Dorsolateral prefrontal cortex (tissue), 120 donors: ENCODE measurements at regions of chr17 and their contacts with region 1.

Region 1: GRCh38 chr17:40349920-40350909 is 14.3 kb downstream of the GJD3 start:
- DNase-seq: no peak
- H3K4me3 ChIP-seq: peak overlapping the region in 8 of 59 donors; percentile 5 to 33 (median 12)
- H3K27ac ChIP-seq: peak overlapping the region in 41 of 59 donors; percentile 5 to 92 (median 66)
- H3K27me3 ChIP-seq: no peaks in the 10 kb centered on the region
- CTCF ChIP-seq: no peak

Region 2: DNA sequence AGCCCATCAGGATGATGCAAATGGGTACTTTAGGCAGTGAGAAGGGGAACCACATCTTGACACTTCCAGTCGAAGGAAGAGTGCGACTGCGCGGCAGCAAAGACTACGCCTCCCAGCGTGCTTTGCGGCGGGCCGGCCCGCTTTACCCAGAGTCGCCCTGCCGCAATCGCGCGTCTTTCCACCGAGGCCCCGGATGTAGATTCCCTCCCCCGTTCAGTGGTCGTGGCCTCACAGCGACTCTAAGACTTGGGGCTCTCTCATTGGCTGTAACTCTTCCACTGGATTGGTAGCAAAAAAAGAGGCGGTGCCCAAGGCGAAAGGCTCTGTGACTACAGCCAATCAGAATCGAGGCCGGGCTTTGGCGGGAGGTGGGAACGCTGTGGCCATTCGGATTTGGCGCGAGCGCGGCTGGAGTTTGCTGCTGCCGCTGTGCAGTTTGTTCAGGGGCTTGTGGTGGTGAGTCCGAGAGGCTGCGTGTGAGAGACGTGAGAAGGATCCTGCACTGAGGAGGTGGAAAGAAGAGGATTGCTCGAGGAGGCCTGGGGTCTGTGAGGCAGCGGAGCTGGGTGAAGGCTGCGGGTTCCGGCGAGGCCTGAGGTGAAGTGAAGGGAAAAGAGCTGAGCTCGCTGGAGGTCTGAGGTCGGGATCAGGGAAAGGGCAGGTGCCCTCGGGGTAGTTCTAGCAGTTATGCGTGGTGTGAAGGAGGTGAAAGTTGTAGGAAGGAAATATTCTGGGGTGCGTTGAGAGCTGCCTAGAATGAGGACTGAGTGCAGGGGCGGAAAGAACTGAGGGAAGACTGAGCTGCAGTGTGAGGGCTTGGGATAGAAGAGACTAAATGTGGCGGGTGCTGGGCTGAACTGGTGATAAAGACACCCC is 62.5 kb before region 1 on chr17 and contains the start of gene CDC6:
- intact Hi-C with region 1: no loop called
- DNase-seq: peak; percentile 98 to 99 (median 99)
- H3K4me3 ChIP-seq: peak within 1 kb of the TSS; percentile 41 to 91 (median 66)
- H3K27ac ChIP-seq: peak within 1 kb of the TSS in 49 of 59 donors; percentile 3 to 83 (median 66)
- H3K27me3 ChIP-seq: no peaks in the 10 kb centered on the region
- CTCF ChIP-seq: peak in 42 of 56 donors; percentile 10 to 69 (median 38)
- total RNA-seq, gene CDC6: 1.0 to 12.6 (median 6.7) TPM

Region 3: DNA sequence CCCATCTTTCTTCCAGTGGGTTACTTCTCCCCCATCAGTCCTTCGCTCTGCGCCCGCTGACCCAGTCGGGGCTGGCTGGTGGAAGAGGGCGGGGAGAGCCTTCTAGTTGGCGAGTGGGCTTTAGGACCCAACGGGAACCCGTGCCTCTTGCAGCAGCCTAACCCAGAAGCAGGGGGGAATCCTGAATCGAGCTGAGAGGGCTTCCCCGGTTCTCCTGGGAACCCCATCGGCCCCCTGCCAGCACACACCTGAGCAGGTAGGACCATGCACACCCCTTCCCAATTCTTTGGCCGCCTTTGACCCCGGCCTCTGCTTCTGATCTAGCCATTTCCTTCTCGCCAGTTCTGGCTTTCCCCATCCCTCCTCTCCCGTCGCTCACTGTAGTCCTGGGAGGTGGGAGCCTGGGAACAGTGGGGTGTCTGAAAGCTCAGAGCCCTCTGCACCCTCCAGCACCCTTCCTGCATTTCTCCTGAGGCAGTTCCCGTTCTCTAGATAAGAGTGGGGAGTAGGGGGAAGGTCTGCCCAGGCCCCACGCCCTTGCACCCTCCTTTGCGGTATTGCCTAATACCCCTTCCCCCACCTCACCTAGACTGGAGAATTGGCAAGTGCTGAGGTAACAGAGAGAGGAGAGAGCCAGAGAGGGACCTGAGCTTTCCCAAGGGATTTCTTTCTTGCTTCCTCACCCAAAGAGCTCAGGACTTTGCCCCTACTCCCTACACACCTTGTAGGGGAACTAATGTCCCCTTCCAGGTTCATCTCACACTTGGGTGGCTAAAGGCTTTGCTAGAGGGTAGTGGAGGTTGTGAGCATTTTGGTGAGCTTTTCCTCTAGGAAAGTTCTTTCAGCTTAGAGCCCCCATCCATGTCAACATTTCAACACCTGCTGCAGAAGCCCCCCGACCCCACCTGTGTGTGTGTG is 40.9 kb before region 1 on chr17 and contains the start of gene RARA:
- intact Hi-C with region 1: loop called in 1 of 2 experiments (anchors 2 kb)
- DNase-seq: peak in 8 of 10 donors; percentile 60 to 88 (median 78)
- H3K4me3 ChIP-seq: peak within 1 kb of the TSS; percentile 21 to 74 (median 61)
- H3K27ac ChIP-seq: peak within 1 kb of the TSS in 31 of 59 donors; percentile 0 to 84 (median 45)
- H3K27me3 ChIP-seq: no peaks in the 10 kb centered on the region
- CTCF ChIP-seq: no peak
- total RNA-seq, gene RARA: 10.4 to 38.8 (median 22.5) TPM